MCF 10A (cell line): ENCODE measurements at regions of chr10 and their contacts with region 1.

Region 1: DNA sequence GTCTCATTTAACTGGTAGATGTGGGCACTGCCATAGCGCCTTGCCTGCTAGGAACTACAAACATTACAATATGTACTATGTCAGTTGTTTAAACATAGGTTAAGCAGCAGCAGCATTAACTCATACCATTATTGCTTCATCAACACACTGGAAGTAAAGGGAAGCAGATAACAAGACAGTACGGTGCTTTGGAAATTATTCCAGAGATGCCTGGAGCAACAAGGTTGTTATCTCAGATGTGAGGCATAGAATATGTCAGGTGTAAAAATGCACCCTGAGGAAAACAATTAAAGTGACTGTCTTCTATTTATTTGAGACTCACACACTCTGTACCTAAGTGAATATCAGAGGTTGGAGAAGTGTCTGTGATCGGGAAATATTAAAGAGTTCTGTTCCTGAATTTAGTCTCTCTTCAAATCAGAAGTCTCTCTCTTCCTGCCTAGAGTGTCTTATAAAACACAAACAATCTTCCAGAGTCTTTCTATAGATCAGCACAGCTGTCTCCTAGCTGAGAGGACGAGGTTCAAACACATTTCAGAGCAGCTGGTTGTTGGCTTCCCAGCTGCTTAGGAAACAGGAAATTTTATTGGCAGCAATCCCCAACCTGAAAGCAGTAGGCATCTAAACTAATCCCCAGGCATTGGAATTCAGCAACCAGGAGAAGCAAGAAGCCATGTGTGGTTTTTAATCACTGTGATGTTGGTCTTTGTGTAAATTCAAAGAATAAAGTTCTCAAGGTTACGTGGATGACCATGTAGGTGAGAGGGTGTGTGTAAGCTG is 994.4 kb upstream of the LRRTM3 start:
- DNase-seq: no peak
- H3K4me3 Mint-ChIP-seq: no peak overlapping the region
- H3K27ac Mint-ChIP-seq: no peak overlapping the region
- H3K4me1 Mint-ChIP-seq: no peaks in the 10 kb centered on the region
- H3K27me3 Mint-ChIP-seq: no peaks in the 10 kb centered on the region
- CTCF ChIP-seq: no peak

Region 2: DNA sequence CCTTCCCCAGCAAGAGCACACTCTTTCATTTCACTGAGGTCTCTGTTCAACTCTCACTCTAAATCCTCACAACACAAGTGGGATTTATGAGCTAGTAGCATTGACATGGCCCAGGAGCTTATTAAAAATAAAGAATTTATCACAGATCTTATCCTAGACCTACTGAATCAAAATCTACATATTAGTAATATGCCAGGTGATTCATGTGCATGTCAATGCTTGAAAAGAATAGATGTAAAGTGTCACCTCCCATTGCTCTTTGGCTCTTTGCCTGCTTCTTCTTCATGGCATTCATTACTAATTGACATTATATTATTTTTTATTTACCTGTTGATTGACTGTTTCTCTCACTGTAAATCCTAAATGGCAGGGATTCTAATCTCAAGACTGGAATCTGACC is 535.1 kb after region 1 on chr10:
- CTCF ChIA-PET with region 1: no interaction called
- POLR2A ChIA-PET with region 1: no interaction called
- intact Hi-C with region 1: loop called (anchors 5 kb)
- DNase-seq: peak; percentile 3
- H3K4me3 Mint-ChIP-seq: no peak overlapping the region
- H3K27ac Mint-ChIP-seq: no peak overlapping the region
- H3K4me1 Mint-ChIP-seq: no peaks in the 10 kb centered on the region
- H3K27me3 Mint-ChIP-seq: no peaks in the 10 kb centered on the region
- CTCF ChIP-seq: no peak